T-cell (primary cell): ENCODE measurements at regions of chr10 and their contacts with region 1.

Region 1: DNA sequence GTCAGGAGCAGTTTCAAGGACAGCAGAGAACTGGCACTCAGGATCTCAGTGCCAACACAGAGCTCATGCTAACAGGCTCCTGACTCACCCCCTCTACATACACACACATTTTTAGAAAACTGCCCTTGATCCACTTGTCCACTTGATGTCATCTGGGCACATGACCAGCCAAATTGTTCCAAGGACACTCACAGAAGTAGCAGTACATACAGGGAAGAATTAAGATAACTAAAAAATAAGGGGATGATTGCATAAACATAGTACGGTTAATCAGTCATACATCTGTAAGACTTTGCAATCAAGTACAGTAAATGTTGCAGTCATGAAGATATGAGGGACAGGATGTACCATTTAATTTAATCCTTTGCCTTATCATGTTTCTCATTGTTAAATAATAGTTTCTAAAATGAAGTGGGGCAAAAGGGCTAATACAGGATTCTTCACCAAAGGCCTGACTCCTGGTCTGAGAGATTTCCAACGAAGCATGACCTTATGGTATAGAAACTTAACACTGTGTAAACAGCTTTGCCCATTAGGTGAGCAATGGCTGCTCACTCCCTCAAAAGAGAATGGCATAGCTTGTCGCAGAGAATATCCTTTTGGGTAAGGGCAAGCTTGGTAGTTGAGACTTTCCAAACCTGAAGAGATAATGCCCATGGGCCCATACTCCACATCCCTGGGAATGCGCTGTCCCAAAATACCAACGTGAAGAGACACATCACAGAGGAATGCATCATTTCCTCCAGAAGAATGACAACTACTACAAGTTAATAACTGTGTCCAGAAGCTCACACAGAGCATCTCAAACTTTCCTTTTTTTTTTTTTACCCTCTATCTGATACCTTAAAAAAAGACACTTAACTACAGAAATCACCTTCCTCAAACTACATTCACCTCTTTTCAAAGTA is 94.1 kb downstream of the ARMH3 start:
- DNase-seq: no peak
- ATAC-seq: no peak
- H3K4me3 ChIP-seq: no peak overlapping the region
- H3K4me3 Mint-ChIP-seq: no peak overlapping the region
- H3K27ac ChIP-seq: no peak overlapping the region
- H3K27ac Mint-ChIP-seq: no peak overlapping the region
- H3K4me1 ChIP-seq: no peaks in the 10 kb centered on the region
- H3K4me1 Mint-ChIP-seq: peaks cover 0 to 10% (median 0%) of the 10 kb centered on the region in 3 donors
- H3K27me3 ChIP-seq: no peaks in the 10 kb centered on the region
- H3K27me3 Mint-ChIP-seq: no peaks in the 10 kb centered on the region

Region 2: GRCh38 chr10:101879456-101880231 is 82.2 kb before region 1 on chr10:
- CTCF ChIA-PET with region 1: no interaction called
- POLR2A ChIA-PET with region 1: interaction called in 1 of 2 experiments, 13 read pairs
- DNase-seq: no peak
- ATAC-seq: no peak
- H3K4me3 ChIP-seq: no peak overlapping the region
- H3K4me3 Mint-ChIP-seq: no peak overlapping the region
- H3K27ac ChIP-seq: no peak overlapping the region
- H3K27ac Mint-ChIP-seq: no peak overlapping the region
- H3K4me1 ChIP-seq: no peaks in the 10 kb centered on the region
- H3K4me1 Mint-ChIP-seq: peaks cover 14 to 17% (median 15%) of the 10 kb centered on the region in 3 donors
- H3K27me3 ChIP-seq: no peaks in the 10 kb centered on the region
- H3K27me3 Mint-ChIP-seq: no peaks in the 10 kb centered on the region

Region 3: GRCh38 chr10:101920546-101920945 is 41.3 kb before region 1 on chr10:
- CTCF ChIA-PET with region 1: no interaction called
- POLR2A ChIA-PET with region 1: no interaction called
- DNase-seq: no peak
- ATAC-seq: no peak
- H3K4me3 ChIP-seq: no peak overlapping the region
- H3K4me3 Mint-ChIP-seq: no peak overlapping the region
- H3K27ac ChIP-seq: no peak overlapping the region
- H3K27ac Mint-ChIP-seq: no peak overlapping the region
- H3K4me1 ChIP-seq: no peaks in the 10 kb centered on the region
- H3K4me1 Mint-ChIP-seq: peaks cover 0 to 3% (median 0%) of the 10 kb centered on the region in 3 donors
- H3K27me3 ChIP-seq: no peaks in the 10 kb centered on the region
- H3K27me3 Mint-ChIP-seq: no peaks in the 10 kb centered on the region